Activated B cell treated with CpG ODN at 0.5 μM for 24 hours (primary cell): ENCODE measurements at regions of chr5 and their contacts with region 1.

Region 1: DNA sequence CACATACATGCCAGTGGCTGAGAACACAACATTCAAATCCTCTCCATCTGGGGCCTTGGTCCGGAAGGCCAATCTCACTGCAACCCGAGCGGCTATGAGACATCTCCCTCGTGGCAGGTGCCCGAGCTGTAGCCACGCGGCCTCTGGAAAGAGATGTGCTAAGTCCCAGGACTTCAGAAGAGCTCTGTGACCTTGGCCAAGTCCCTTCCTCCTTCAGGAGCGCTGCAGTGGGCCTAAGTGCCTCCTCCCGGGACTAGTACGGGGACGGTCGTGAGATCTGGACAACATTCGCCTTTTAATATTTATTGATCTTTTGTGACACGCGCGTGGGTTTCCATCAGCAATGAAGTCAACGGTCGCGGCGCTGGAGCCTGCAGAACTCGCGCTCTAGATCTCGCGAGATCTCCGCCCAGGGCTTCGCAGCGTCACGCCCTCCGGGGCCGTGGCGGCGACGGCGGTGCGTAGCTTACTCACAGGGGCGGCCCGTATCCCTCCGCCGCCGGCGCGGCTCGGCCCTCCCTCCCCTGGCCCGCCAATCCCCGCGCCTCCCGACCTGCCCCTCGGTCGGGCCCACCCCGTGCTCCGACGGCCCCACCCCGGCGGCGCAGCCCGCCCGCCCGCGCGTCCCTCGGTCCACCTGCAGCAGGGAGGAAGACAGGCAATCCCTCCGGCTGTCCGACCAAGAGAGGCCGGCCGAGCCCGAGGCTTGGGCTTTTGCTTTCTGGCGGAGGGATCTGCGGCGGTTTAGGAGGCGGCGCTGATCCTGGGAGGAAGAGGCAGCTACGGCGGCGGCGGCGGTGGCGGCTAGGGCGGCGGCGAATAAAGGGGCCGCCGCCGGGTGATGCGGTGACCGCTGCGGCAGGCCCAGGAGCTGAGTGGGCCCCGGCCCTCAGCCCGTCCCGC is at the start of gene UBE2D2:
- DNase-seq: peak; percentile 95
- ATAC-seq: peak; percentile 86
- H3K4me3 Mint-ChIP-seq: peak within 1 kb of the TSS; percentile 93
- H3K27ac Mint-ChIP-seq: peak within 1 kb of the TSS; percentile 95
- H3K4me1 Mint-ChIP-seq: peaks cover 41% of the 10 kb centered on the region
- H3K27me3 Mint-ChIP-seq: no peaks in the 10 kb centered on the region
- CTCF ChIP-seq: no peak
- total RNA-seq, gene UBE2D2: 152 and 172 TPM in 2 replicates

Region 2: GRCh38 chr5:139439013-139439903 is 121.7 kb before region 1 on chr5 and contains the start of gene DNAJC18:
- CTCF ChIA-PET with region 1: no interaction called
- POLR2A ChIA-PET with region 1: interaction called, 16 read pairs
- intact Hi-C with region 1: loop called (anchors 1 kb)
- DNase-seq: peak; percentile 87
- ATAC-seq: peak; percentile 95
- H3K4me3 Mint-ChIP-seq: peak within 1 kb of the TSS; percentile 99
- H3K27ac Mint-ChIP-seq: peak within 1 kb of the TSS; percentile 99
- H3K4me1 Mint-ChIP-seq: peaks cover 12% of the 10 kb centered on the region
- H3K27me3 Mint-ChIP-seq: no peaks in the 10 kb centered on the region
- CTCF ChIP-seq: no peak
- total RNA-seq, gene DNAJC18: 9.1 and 9.6 TPM in 2 replicates

Region 3: DNA sequence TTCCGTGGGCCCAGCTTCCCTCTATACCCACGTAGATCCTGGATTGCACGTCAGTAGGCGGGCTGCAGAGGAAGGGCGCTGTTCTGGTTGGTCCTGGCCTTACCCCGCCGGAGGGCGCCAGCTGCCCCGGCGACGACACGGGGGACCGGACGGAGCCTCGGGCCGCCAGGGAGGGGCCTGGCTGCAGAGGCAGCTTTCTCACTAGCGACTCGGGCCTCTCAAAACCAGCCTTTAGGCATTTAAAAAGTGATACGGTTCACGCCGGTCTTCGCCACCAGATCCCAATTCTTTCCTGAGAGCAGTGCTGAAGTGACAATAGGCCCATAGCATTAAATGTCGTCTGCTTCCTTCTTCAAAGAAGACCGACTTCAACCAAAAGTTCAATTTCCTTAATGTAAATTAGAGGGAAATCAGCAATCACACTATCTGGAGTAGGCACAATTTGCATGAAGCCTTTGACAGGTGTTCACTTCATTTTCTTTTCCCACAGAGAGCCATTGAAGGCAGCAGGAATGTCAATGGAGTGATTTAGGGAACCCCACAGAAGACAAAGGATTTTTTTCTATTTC is 17.5 kb before region 1 on chr5:
- CTCF ChIA-PET with region 1: interaction called, 10 read pairs
- POLR2A ChIA-PET with region 1: interaction called, 17 read pairs
- intact Hi-C with region 1: loop called (anchors 1 kb)
- DNase-seq: peak; percentile 66
- ATAC-seq: peak; percentile 98
- H3K4me3 Mint-ChIP-seq: peak overlapping the region; percentile 74
- H3K27ac Mint-ChIP-seq: peak overlapping the region; percentile 86
- H3K4me1 Mint-ChIP-seq: peaks cover 14% of the 10 kb centered on the region
- H3K27me3 Mint-ChIP-seq: no peaks in the 10 kb centered on the region
- CTCF ChIP-seq: no peak

Region 4: DNA sequence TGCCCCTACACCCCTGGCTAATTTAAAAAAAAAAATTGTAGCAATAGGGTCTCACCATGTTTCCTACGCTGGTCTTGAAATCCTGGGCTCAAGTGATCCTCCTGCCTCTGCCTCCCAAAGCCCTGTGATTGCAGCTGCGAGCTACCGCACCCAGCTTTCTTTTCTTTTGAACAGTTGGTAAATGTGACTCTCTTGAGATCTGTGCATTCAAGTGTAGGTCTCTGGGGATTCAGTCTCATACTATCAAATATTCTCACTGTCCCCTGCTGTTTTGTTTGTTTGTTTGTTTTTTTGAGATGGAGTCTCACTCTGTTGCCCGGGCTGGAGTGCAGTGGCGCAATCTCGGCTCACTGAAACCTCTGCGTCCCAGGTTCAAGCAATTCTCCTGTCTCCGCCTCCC is 44.9 kb after region 1 on chr5:
- CTCF ChIA-PET with region 1: interaction called, 4 read pairs
- POLR2A ChIA-PET with region 1: interaction called, 19 read pairs
- intact Hi-C with region 1: no loop called
- DNase-seq: no peak
- ATAC-seq: peak; percentile 86
- H3K4me3 Mint-ChIP-seq: peak overlapping the region; percentile 60
- H3K27ac Mint-ChIP-seq: peak overlapping the region; percentile 47
- H3K4me1 Mint-ChIP-seq: peaks cover 41% of the 10 kb centered on the region
- H3K27me3 Mint-ChIP-seq: no peaks in the 10 kb centered on the region
- CTCF ChIP-seq: no peak

Region 5: GRCh38 chr5:139670369-139671095 is 109.5 kb after region 1 on chr5:
- CTCF ChIA-PET with region 1: interaction called, 3 read pairs
- POLR2A ChIA-PET with region 1: interaction called, 3 read pairs
- intact Hi-C with region 1: loop called (anchors 5 kb)
- DNase-seq: peak; percentile 65
- ATAC-seq: peak; percentile 61
- H3K4me3 Mint-ChIP-seq: peak overlapping the region; percentile 86
- H3K27ac Mint-ChIP-seq: peak overlapping the region; percentile 92
- H3K4me1 Mint-ChIP-seq: peaks cover 92% of the 10 kb centered on the region
- H3K27me3 Mint-ChIP-seq: no peaks in the 10 kb centered on the region
- CTCF ChIP-seq: no peak

Region 6: GRCh38 chr5:140664359-140665119 is 1103.5 kb after region 1 on chr5 and contains the start of gene WDR55:
- CTCF ChIA-PET with region 1: no interaction called
- POLR2A ChIA-PET with region 1: no interaction called
- intact Hi-C with region 1: no loop called
- DNase-seq: peak; percentile 91
- ATAC-seq: peak; percentile 98
- H3K4me3 Mint-ChIP-seq: peak within 1 kb of the TSS; percentile 97
- H3K27ac Mint-ChIP-seq: peak within 1 kb of the TSS; percentile 95
- H3K4me1 Mint-ChIP-seq: peaks cover 30% of the 10 kb centered on the region
- H3K27me3 Mint-ChIP-seq: no peaks in the 10 kb centered on the region
- CTCF ChIP-seq: no peak
- total RNA-seq, gene WDR55: 33.8 and 36.9 TPM in 2 replicates